Panc1 (cell line): ENCODE measurements at regions of chr2 and their contacts with region 1.

Region 1: DNA sequence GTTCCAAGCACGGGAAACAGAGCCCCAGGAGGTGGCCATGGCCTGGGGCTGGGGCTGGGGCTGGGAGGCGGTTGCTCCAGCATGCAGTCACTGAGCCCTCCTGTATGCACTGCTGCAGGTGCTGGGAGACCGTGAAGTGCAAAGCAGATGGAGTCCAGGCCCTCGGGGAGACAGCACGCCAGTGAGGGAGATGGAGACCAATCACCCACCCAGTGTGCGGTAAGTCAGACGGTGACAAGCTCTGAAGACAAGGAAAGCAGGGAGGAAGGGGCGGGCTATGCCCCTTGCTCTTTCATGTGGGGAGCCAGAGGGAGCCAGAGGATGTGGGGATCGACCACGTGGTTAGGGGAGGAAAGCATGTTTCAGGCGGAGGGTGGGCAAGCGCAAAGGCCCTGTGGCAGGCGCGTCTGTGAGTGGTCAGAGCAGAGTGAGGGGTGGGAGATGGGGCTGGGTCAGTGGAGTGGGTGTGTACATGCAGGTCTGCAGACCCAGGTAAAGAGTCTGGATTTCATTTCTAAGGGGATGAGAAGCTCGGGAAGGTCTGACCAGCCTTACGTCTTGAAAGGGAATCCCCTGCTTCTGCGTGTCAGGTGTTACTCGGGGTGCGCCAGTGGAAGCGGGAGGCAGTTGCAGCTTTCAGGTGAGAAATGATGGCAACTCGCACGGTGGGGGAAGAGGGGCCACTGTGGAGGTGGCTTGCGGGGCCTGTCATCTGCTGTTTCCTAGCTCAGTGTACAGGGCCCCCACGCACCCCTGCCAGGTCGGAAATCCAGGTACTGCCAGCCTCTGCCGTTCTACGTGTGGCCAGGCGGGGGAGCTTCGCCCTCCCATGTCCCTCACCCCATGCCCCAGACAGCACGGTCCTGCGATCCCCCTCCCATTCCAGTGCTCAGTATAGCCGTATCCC is 19.4 kb downstream of the RRM2 start:
- DNase-seq: no peak
- ATAC-seq: peak; percentile 73
- H3K4me3 ChIP-seq: no peak overlapping the region
- H3K27ac ChIP-seq: no peak overlapping the region
- H3K4me1 ChIP-seq: peaks cover 14% of the 10 kb centered on the region; the same call in 1 of the 2 replicates
- H3K27me3 ChIP-seq: no peaks in the 10 kb centered on the region
- CTCF ChIP-seq: peak; percentile 93

Region 2: DNA sequence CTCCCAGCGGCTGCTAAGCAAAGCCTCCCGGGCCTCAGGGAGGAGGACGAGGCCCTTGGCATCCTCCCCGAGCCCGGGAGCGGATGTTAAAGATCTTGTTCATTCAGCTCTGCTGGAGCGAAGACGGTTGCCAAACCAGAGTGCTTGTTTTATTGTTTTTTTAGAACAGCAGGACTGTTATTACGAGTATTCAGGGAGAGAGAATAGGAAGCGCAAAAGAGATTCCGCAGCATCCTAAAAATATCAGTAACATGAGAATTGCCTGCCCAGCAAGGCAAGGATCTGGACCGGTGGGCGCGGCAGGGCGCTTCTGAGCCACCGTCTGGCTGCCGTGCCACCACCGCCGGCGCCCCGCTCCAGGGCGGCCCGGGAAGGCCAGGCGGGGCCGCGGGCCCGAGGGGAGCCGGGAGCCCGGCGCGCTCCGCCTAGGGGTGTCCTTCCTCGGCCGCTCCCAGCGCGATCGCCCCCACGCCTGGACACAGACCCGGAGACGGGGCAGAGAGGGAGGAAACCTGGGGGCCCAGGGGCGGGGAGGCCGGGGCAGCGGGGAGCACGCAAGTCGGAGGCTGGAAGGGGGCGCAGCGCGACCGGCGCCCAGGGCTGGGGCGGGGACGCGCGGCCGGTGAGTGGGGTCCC is 62.6 kb before region 1 on chr2:
- CTCF ChIA-PET with region 1: no interaction called
- POLR2A ChIA-PET with region 1: no interaction called
- in situ Hi-C with region 1: no loop called
- intact Hi-C with region 1: no loop called
- DNase-seq: no peak
- ATAC-seq: peak; percentile 79
- H3K4me3 ChIP-seq: peak overlapping the region; percentile 61 to 72
- H3K27ac ChIP-seq: peak overlapping the region; percentile 83
- H3K4me1 ChIP-seq: peaks cover 30% of the 10 kb centered on the region
- H3K27me3 ChIP-seq: no peaks in the 10 kb centered on the region
- CTCF ChIP-seq: no peak

Region 3: GRCh38 chr2:10302479-10303180 is 160.6 kb after region 1 on chr2 and contains the start of gene HPCAL1:
- CTCF ChIA-PET with region 1: no interaction called
- POLR2A ChIA-PET with region 1: no interaction called
- in situ Hi-C with region 1: no loop called
- intact Hi-C with region 1: loop called (anchors 10 kb)
- DNase-seq: no peak
- ATAC-seq: peak; percentile 87
- H3K4me3 ChIP-seq: peak within 1 kb of the TSS; percentile 88 to 94
- H3K27ac ChIP-seq: peak within 1 kb of the TSS; percentile 91
- H3K4me1 ChIP-seq: peaks cover 52% of the 10 kb centered on the region
- H3K27me3 ChIP-seq: no peaks in the 10 kb centered on the region
- CTCF ChIP-seq: peak; percentile 82
- total RNA-seq, gene HPCAL1: 234 TPM

Region 4: GRCh38 chr2:10408649-10409579 is 266.9 kb after region 1 on chr2:
- CTCF ChIA-PET with region 1: interaction called, 6 read pairs
- POLR2A ChIA-PET with region 1: no interaction called
- in situ Hi-C with region 1: no loop called
- intact Hi-C with region 1: loop called (anchors 10 kb)
- DNase-seq: peak; percentile 74
- ATAC-seq: peak; percentile 53
- H3K4me3 ChIP-seq: 0 out of 4 replicates have a peak overlapping the region, but pooled peaks of 1 of the 2 experiments have one; percentile 1
- H3K27ac ChIP-seq: peak overlapping the region; percentile 99
- H3K4me1 ChIP-seq: peaks cover 72% of the 10 kb centered on the region
- H3K27me3 ChIP-seq: no peaks in the 10 kb centered on the region
- CTCF ChIP-seq: peak; percentile 98

Region 5: GRCh38 chr2:10434886-10435819 is 293.2 kb after region 1 on chr2:
- CTCF ChIA-PET with region 1: interaction called, 25 read pairs
- POLR2A ChIA-PET with region 1: no interaction called
- in situ Hi-C with region 1: no loop called
- intact Hi-C with region 1: no loop called
- DNase-seq: no peak
- ATAC-seq: peak; percentile 61
- H3K4me3 ChIP-seq: no peak overlapping the region
- H3K27ac ChIP-seq: peak overlapping the region; percentile 26; the same call in 1 of the 2 replicates
- H3K4me1 ChIP-seq: peaks cover 43% of the 10 kb centered on the region
- H3K27me3 ChIP-seq: no peaks in the 10 kb centered on the region
- CTCF ChIP-seq: peak; percentile 97